CD8-positive, alpha-beta T cell (primary cell): ENCODE measurements at regions of chr12 and their contacts with region 1.

Region 1: DNA sequence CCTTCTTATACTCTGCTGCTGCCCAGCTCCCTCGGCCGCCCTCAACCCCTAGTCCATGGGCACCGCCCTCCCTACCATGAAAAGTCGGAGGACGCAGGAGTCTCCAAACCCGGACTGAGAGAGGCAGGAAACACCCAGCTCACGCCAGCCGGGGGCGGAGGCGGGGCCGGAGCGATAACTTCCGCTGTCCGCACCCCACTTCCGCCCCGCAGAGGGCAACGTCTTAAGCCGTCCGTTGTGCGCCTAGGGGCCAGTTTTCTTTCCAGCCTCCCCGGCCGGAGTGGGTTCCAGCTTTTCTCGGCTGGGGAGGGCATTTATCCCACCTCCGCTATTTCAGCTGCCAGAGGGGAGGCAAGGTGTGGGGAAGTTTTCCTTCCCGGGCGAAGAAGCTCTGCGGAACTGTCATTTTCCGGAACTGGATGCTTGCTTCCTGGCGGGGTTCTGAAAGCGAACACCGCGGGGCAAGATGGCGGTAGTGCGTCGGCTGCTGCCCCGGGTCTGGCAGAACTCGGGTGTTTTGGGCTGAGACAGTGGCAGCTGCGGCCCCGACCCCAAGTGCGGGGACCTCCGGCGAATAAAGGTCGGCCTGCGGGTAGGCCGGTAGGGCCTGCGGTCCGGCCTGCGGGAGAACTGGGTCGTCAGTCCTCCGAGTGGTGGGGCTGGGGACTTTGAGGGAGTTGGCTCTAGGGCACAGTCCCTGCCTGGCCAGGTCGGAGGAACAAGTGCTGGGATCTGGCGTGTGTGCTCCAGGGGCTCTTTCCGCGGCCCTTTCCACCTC is at the starts of genes KCTD10 and UBE3B:
- DNase-seq: peak; percentile 73 to 94 (median 86)
- ATAC-seq: peak; percentile 90
- H3K4me3 ChIP-seq: peak within 1 kb of the TSS; percentile 92 to 94
- H3K4me3 Mint-ChIP-seq: peak within 1 kb of the TSS; percentile 97
- H3K27ac ChIP-seq: peak within 1 kb of the TSS; percentile 76 to 94
- H3K27ac Mint-ChIP-seq: peak within 1 kb of the TSS; percentile 98
- H3K4me1 ChIP-seq: peaks cover 35% of the 10 kb centered on the region
- H3K4me1 Mint-ChIP-seq: peaks cover 51% of the 10 kb centered on the region
- H3K27me3 ChIP-seq: no peaks in the 10 kb centered on the region
- H3K27me3 Mint-ChIP-seq: no peaks in the 10 kb centered on the region
- CTCF ChIP-seq: no peak
- total RNA-seq, gene KCTD10: 26.2 to 31.3 TPM
- total RNA-seq, gene UBE3B: 16.5 to 17.8 TPM

Region 2: DNA sequence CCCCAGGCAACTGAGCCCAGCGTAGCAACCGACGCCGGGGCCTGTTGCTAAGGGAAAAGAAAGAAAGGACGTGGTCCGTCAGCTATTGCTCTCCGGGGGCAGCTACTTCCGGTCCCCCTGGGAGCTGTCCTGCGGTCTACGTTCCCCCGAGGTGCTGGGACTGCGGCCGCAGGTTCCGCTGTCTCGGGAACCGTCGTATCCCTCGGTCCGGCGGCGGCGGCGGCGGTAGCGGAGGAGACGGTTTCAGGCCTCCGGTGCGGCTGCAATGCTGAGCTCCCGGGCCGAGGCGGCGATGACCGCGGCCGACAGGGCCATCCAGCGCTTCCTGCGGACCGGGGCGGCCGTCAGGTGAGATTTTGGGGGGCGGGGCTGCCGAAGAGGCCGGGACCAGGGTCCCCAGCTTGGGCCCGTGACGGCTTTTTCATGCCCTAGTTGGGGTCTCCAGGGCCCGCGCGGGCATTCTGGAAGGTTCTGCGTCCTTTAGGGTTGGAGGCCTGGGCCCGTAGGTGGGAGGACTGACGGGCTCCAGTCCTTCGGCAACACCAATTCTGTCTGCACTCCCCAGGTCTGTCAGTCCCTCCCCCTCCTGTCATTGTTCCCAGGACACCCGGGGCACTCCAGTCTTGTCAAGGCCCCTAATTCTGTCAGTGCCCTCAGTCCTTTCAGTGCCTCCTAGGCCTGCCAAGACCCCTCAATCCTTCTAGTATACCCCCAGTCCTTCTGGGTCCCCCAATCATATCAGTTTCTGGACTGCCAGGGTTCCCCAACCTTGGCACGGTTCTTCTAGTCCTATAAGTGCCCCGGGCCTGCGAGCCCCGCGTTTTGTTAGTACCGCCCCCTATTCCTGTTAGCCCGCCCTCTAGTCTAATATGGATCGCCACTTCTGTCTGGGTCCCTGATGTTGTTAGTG is 424.7 kb before region 1 on chr12 and contains the start of gene USP30:
- CTCF ChIA-PET with region 1: no interaction called
- POLR2A ChIA-PET with region 1: no interaction called
- intact Hi-C with region 1: loop called (anchors 2 kb)
- DNase-seq: peak; percentile 73 to 93 (median 85)
- ATAC-seq: peak; percentile 74
- H3K4me3 ChIP-seq: peak within 1 kb of the TSS; percentile 85 to 90
- H3K4me3 Mint-ChIP-seq: peak within 1 kb of the TSS; percentile 89
- H3K27ac ChIP-seq: peak within 1 kb of the TSS; percentile 68 to 91
- H3K27ac Mint-ChIP-seq: peak within 1 kb of the TSS; percentile 96
- H3K4me1 ChIP-seq: peaks cover 7% of the 10 kb centered on the region
- H3K4me1 Mint-ChIP-seq: peaks cover 21% of the 10 kb centered on the region
- H3K27me3 ChIP-seq: no peaks in the 10 kb centered on the region
- H3K27me3 Mint-ChIP-seq: no peaks in the 10 kb centered on the region
- CTCF ChIP-seq: no peak
- total RNA-seq, gene USP30: 28.2 to 33.1 TPM

Region 3: GRCh38 chr12:109154451-109155438 is 322.6 kb before region 1 on chr12:
- CTCF ChIA-PET with region 1: no interaction called
- POLR2A ChIA-PET with region 1: no interaction called
- intact Hi-C with region 1: loop called in 1 of 2 experiments (anchors 5 kb)
- DNase-seq: peak; percentile 60 to 89 (median 78)
- ATAC-seq: peak; percentile 98
- H3K4me3 ChIP-seq: peak overlapping the region; percentile 60 to 80
- H3K4me3 Mint-ChIP-seq: peak overlapping the region; percentile 95
- H3K27ac ChIP-seq: peak overlapping the region; percentile 22 to 46
- H3K27ac Mint-ChIP-seq: peak overlapping the region; percentile 89
- H3K4me1 ChIP-seq: peaks cover 20% of the 10 kb centered on the region
- H3K4me1 Mint-ChIP-seq: peaks cover 17% of the 10 kb centered on the region
- H3K27me3 ChIP-seq: no peaks in the 10 kb centered on the region
- H3K27me3 Mint-ChIP-seq: peaks cover 3% of the 10 kb centered on the region
- CTCF ChIP-seq: no peak

Region 4: DNA sequence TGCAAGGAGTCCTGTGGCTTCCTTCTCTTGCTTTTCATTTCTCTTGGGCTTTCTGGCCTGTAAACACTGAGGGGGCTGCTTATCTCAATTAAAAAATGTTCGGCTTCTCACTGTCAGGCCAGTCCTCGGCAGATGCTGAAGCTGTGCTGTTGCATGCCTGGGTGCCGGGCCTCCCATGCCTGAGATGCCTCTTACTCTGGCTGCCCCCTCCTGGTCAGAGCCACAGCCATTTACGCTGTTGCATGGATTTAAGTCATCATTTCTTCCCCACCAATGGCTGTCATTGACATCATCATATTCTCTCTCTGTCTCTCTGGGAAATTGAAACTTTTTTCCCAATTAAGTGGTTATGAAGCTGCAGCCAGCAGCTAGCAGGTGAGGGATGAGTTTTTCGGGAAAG is 222.0 kb before region 1 on chr12:
- CTCF ChIA-PET with region 1: no interaction called
- POLR2A ChIA-PET with region 1: no interaction called
- intact Hi-C with region 1: no loop called
- DNase-seq: no peak
- ATAC-seq: no peak
- H3K4me3 ChIP-seq: no peak overlapping the region
- H3K4me3 Mint-ChIP-seq: no peak overlapping the region
- H3K27ac ChIP-seq: no peak overlapping the region
- H3K27ac Mint-ChIP-seq: no peak overlapping the region
- H3K4me1 ChIP-seq: no peaks in the 10 kb centered on the region
- H3K4me1 Mint-ChIP-seq: no peaks in the 10 kb centered on the region
- H3K27me3 ChIP-seq: no peaks in the 10 kb centered on the region
- H3K27me3 Mint-ChIP-seq: no peaks in the 10 kb centered on the region
- CTCF ChIP-seq: no peak

Region 5: DNA sequence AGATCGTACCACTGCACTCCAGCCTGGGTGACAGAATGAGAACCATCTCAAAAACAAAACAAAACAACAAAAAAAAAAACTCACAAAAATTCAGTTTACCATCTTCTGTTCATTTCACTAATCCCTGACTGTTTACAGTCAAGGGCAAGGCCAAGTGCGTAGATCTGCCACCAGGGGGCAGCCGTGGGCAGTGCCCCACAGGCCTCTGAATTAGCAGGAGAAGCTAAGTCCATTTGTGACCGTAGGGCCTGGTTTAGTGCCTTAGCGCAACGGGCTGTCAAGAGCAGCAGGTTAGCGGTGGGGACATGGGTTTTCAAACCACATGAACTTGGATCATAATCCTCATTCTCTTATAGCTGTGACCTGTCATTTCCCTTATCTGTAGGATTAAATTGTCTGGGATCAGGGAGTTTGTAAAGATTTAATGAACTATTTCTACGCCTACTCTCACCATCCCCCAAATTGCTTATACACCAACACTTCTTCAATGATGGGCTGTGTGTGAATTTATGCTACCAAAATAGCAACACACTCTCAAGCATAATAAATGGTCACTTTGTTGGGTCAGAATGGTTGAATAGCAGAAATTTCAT is 49.2 kb before region 1 on chr12:
- CTCF ChIA-PET with region 1: interaction called, 7 read pairs
- POLR2A ChIA-PET with region 1: no interaction called
- intact Hi-C with region 1: loop called in 1 of 2 experiments (anchors 1 kb)
- DNase-seq: peak; percentile 39 to 84 (median 73)
- ATAC-seq: peak; percentile 81
- H3K4me3 ChIP-seq: no peak overlapping the region
- H3K4me3 Mint-ChIP-seq: no peak overlapping the region
- H3K27ac ChIP-seq: no peak overlapping the region
- H3K27ac Mint-ChIP-seq: no peak overlapping the region
- H3K4me1 ChIP-seq: peaks cover 3% of the 10 kb centered on the region
- H3K4me1 Mint-ChIP-seq: peaks cover 6% of the 10 kb centered on the region
- H3K27me3 ChIP-seq: no peaks in the 10 kb centered on the region
- H3K27me3 Mint-ChIP-seq: peaks cover 6% of the 10 kb centered on the region
- CTCF ChIP-seq: peak; percentile 93

Region 6: GRCh38 chr12:109462710-109463692 is 14.4 kb before region 1 on chr12:
- CTCF ChIA-PET with region 1: interaction called, 3 read pairs
- POLR2A ChIA-PET with region 1: interaction called, 10 read pairs
- intact Hi-C with region 1: no loop called
- DNase-seq: peak in 1 of 9 experiments; percentile 19
- ATAC-seq: peak; percentile 40
- H3K4me3 ChIP-seq: no peak overlapping the region
- H3K4me3 Mint-ChIP-seq: peak overlapping the region; percentile 27
- H3K27ac ChIP-seq: no peak overlapping the region
- H3K27ac Mint-ChIP-seq: peak overlapping the region; percentile 47
- H3K4me1 ChIP-seq: peaks cover 16% of the 10 kb centered on the region
- H3K4me1 Mint-ChIP-seq: peaks cover 53% of the 10 kb centered on the region
- H3K27me3 ChIP-seq: no peaks in the 10 kb centered on the region
- H3K27me3 Mint-ChIP-seq: no peaks in the 10 kb centered on the region
- CTCF ChIP-seq: no peak

Region 7: DNA sequence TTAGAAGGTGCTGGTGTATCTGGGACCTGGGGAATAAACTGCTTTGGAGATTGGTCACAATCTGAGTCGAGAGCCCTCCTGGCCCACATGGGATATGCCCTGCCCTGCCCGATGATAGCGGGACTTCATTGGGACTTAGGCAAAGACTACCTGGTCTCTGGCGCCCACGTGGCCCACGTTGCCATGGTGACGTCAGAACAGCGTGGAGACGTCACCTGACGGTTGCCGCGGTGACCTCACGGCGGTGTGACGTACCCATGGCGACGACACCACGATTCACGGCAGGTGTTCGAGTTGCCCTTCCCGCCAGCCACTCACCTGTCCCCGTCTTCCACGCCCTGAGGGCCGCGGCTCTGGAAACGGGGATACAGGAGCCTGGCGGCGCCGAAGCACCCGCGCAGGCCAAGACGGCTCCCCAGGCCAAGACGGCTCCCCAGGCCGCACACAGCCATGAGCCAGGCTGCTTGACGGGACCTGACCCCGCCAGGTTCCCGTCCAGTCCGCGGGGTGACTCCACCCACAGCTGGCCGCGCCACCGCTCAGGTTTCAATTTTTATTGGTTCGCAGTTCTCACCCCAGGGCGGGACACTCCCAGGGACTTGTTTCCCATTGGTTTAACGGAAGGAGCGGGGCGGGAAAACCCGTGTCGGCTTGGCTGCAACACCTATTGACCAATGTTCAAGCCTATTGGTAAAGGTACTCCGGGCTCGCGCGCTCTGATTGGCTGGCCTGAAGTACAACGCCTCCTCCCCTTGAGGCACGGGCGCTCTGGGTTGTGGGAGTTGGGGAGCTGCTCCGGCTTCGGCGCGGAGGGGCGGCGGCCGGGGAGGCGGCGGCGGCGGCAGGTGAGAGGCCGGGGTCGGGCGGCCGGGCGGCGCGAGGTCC is 95.9 kb after region 1 on chr12 and contains the starts of genes MMAB and MVK:
- CTCF ChIA-PET with region 1: no interaction called
- POLR2A ChIA-PET with region 1: interaction called, 11 read pairs
- intact Hi-C with region 1: loop called (anchors 1 kb)
- DNase-seq: peak; percentile 96 to 99 (median 98)
- ATAC-seq: peak; percentile 92
- H3K4me3 ChIP-seq: peak within 1 kb of the TSS; percentile 73 to 82
- H3K4me3 Mint-ChIP-seq: peak within 1 kb of the TSS; percentile 95
- H3K27ac ChIP-seq: peak within 1 kb of the TSS; percentile 95
- H3K27ac Mint-ChIP-seq: peak within 1 kb of the TSS; percentile 96
- H3K4me1 ChIP-seq: peaks cover 16% of the 10 kb centered on the region
- H3K4me1 Mint-ChIP-seq: peaks cover 35% of the 10 kb centered on the region
- H3K27me3 ChIP-seq: no peaks in the 10 kb centered on the region
- H3K27me3 Mint-ChIP-seq: no peaks in the 10 kb centered on the region
- CTCF ChIP-seq: no peak
- total RNA-seq, gene MMAB: 10.2 to 11.7 TPM
- total RNA-seq, gene MVK: 11.5 to 13.9 TPM

Region 8: DNA sequence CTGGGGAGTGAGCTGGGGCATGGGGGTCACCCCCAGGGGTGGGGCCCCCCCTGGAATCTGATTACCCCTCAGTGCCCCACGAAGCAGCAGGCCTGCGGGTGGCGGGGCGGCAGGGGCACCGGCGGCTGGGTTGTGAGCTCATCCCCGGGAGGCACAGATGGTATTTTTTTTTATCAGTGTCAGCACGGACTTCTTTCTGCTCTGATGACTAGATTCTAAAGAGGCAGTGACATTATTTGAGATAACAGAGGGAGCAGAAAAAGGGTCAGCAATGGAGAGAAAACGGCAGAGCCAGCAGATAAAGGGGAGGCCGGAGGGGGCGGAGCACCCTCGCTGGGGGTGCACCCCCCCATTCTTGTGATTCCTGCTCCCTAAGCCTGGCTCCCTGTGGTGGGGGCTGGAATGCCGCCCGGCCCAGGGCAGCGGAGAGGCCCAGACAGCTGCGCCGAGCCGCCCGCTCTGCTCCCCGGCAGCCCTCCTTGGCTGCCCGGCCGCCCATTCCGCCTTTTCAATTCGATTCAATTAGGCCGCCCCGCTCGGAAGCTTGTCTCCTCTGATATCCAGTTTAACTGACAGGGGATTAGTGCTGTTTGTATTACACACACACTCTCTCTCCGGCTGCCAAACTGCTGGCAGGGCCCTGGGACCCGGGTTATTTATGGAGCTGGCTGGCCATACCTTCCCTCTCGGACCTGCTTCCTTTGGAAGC is 129.1 kb after region 1 on chr12:
- CTCF ChIA-PET with region 1: no interaction called
- POLR2A ChIA-PET with region 1: no interaction called
- intact Hi-C with region 1: no loop called
- DNase-seq: no peak
- ATAC-seq: no peak
- H3K4me3 ChIP-seq: no peak overlapping the region
- H3K4me3 Mint-ChIP-seq: no peak overlapping the region
- H3K27ac ChIP-seq: no peak overlapping the region
- H3K27ac Mint-ChIP-seq: no peak overlapping the region
- H3K4me1 ChIP-seq: no peaks in the 10 kb centered on the region
- H3K4me1 Mint-ChIP-seq: no peaks in the 10 kb centered on the region
- H3K27me3 ChIP-seq: no peaks in the 10 kb centered on the region
- H3K27me3 Mint-ChIP-seq: peaks cover 19% of the 10 kb centered on the region
- CTCF ChIP-seq: no peak

Region 9: GRCh38 chr12:109653890-109654289 is 176.5 kb after region 1 on chr12:
- CTCF ChIA-PET with region 1: no interaction called
- POLR2A ChIA-PET with region 1: no interaction called
- intact Hi-C with region 1: no loop called
- DNase-seq: no peak
- ATAC-seq: no peak
- H3K4me3 ChIP-seq: no peak overlapping the region
- H3K4me3 Mint-ChIP-seq: no peak overlapping the region
- H3K27ac ChIP-seq: no peak overlapping the region
- H3K27ac Mint-ChIP-seq: no peak overlapping the region
- H3K4me1 ChIP-seq: no peaks in the 10 kb centered on the region
- H3K4me1 Mint-ChIP-seq: no peaks in the 10 kb centered on the region
- H3K27me3 ChIP-seq: peaks cover 0 to 3% of the 10 kb centered on the region in 2 experiments
- H3K27me3 Mint-ChIP-seq: peaks cover 12% of the 10 kb centered on the region
- CTCF ChIP-seq: no peak

Region 10: GRCh38 chr12:110124184-110124995 is 647.0 kb after region 1 on chr12 and contains the start of gene IFT81:
- CTCF ChIA-PET with region 1: no interaction called
- POLR2A ChIA-PET with region 1: no interaction called
- intact Hi-C with region 1: loop called in 1 of 2 experiments (anchors 5 kb)
- DNase-seq: peak; percentile 94 to 99 (median 96)
- ATAC-seq: peak; percentile 95
- H3K4me3 ChIP-seq: peak within 1 kb of the TSS; percentile 69 to 96
- H3K4me3 Mint-ChIP-seq: peak within 1 kb of the TSS; percentile 91
- H3K27ac ChIP-seq: peak within 1 kb of the TSS; percentile 60 to 73
- H3K27ac Mint-ChIP-seq: peak within 1 kb of the TSS; percentile 83
- H3K4me1 ChIP-seq: peaks cover 10% of the 10 kb centered on the region
- H3K4me1 Mint-ChIP-seq: peaks cover 8% of the 10 kb centered on the region
- H3K27me3 ChIP-seq: no peaks in the 10 kb centered on the region
- H3K27me3 Mint-ChIP-seq: peaks cover 3% of the 10 kb centered on the region
- CTCF ChIP-seq: no peak
- total RNA-seq, gene IFT81: 0.25 to 0.43 TPM